Right ventricle myocardium superior (tissue), 1 donor: ENCODE measurements at regions of chr3 and their contacts with region 1.

Region 1: GRCh38 chr3:9302425-9303181 is 53.2 kb upstream of the SRGAP3 start:
- DNase-seq: peak; percentile 87
- ATAC-seq: peak; percentile 97

Region 2: DNA sequence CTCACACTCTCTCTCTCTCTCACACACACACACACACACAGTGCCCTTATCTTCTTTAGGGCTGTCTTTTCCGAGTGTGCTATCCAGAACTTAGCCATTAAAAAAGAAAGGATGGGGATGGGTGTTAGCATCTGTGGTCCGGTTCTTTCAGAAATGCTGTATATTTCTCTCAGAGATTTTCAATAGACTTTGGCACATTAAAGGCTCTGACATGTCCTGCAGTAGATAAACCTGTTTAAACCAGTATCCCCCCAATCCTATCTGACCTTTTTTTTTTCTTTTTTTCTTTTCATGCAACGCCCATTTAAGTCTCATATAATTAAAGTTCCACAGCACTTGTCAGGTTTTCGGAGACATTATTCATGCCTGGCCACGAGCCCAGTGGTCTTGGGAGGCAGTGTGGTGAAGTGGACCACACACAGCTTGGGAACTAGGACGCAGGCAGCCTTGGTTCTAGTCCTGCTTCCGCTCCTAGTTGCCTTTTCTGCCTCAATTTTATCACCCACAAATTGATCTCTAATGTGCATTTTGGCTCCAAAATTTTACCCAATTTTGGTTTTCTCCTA is 555.7 kb before region 1 on chr3:
- intact Hi-C with region 1: no loop called
- DNase-seq: no peak
- ATAC-seq: no peak

Region 3: GRCh38 chr3:8970971-8971589 is 331.5 kb before region 1 on chr3:
- intact Hi-C with region 1: loop called (anchors 5 kb)
- DNase-seq: no peak
- ATAC-seq: peak; percentile 84

Region 4: GRCh38 chr3:8987645-8988383 is 314.8 kb before region 1 on chr3:
- intact Hi-C with region 1: loop called (anchors 5 kb)
- DNase-seq: peak; percentile 74
- ATAC-seq: peak; percentile 80

Region 5: DNA sequence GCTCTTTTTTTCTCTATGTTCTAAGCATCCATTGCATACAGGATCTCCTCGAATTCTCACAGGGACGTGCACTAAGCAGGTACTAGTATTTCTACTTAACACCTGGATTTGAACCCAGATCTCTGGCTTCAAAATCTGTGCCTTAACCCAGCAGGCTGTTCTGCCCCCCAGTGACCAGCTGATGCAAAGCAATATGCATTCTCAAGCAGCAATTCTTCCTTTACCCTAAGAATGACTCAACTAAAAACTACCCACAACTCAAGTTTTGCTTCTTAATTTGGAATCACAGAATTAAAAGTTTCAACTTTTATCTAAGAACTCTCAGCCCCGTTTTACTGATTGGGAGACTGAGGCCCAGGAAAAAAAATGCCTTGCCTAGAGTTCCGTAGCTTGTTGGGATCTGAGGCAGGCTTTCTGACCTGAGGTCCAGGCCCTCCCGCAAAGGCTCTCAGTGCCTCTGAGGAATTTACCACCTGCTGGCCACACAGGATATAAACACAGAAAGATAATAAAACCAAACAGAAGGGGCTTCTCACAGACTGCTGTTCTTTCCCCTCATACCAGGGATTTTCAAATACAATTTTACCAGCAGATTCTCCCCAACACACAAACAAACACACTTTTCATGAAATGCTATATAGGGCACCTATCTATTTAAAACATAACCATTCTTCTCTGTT is 223.9 kb before region 1 on chr3:
- intact Hi-C with region 1: loop called (anchors 10 kb)
- DNase-seq: no peak
- ATAC-seq: no peak